ENCODE measurements at regions of chr20 and their contacts with region 1.

Region 1: GRCh38 chr20:46022411-46023147 is 6.4 kb upstream of the SLC12A5 start:
- DNase-seq: peak in 6 of 7 donors; percentile 53 to 71 (median 70)
- H3K4me3 ChIP-seq: peak overlapping the region in 1 of 4 donors; percentile 83
- H3K27ac ChIP-seq: no peak overlapping the region
- H3K4me1 ChIP-seq: peaks cover 0 to 12% of the 10 kb centered on the region in 2 donors
- H3K27me3 ChIP-seq: no peaks in the 10 kb centered on the region
- CTCF ChIP-seq: peak; percentile 42 to 87 (median 66)
- POLR2A ChIP-seq: no peak

Region 2: DNA sequence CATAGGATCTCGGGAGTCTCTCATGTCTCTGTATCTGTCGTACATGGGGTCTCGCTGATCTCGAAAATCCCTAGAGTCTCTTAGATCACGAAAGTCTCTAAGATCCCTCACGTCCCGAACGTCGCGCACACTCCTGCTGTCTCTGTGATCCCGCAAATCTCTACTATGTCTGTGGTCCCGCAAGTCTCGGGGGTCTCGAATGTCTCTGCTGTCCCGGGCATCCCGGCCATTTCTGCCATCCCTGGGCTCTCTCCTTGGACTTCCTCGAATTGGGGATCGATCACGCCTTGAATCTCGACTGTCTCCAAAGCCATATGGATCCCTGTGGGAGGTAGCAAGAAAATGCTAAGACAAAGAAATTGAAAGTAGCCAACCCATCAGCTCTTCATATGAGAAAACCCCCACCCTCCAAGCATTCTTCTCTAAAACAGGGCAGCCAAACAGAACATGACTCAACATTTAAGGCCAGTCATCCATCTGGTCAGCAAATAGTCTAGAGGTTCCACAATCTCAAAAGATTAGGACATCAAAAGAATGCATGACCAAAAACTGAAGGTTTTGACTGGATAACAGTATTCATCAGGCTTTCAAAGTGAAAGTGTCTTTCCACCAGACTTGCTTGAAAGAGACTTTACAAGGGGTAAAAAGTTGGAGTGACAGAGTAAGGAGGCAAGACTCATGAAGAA is 47.8 kb after region 1 on chr20:
- intact Hi-C with region 1: loop called in 1 of 2 experiments (anchors 10 kb)
- DNase-seq: peak in 1 of 7 donors; percentile 37
- H3K4me3 ChIP-seq: no peak overlapping the region
- H3K27ac ChIP-seq: no peak overlapping the region
- H3K4me1 ChIP-seq: peaks cover 0 to 10% of the 10 kb centered on the region in 2 donors
- H3K27me3 ChIP-seq: no peaks in the 10 kb centered on the region
- CTCF ChIP-seq: no peak
- POLR2A ChIP-seq: no peak

Region 3: DNA sequence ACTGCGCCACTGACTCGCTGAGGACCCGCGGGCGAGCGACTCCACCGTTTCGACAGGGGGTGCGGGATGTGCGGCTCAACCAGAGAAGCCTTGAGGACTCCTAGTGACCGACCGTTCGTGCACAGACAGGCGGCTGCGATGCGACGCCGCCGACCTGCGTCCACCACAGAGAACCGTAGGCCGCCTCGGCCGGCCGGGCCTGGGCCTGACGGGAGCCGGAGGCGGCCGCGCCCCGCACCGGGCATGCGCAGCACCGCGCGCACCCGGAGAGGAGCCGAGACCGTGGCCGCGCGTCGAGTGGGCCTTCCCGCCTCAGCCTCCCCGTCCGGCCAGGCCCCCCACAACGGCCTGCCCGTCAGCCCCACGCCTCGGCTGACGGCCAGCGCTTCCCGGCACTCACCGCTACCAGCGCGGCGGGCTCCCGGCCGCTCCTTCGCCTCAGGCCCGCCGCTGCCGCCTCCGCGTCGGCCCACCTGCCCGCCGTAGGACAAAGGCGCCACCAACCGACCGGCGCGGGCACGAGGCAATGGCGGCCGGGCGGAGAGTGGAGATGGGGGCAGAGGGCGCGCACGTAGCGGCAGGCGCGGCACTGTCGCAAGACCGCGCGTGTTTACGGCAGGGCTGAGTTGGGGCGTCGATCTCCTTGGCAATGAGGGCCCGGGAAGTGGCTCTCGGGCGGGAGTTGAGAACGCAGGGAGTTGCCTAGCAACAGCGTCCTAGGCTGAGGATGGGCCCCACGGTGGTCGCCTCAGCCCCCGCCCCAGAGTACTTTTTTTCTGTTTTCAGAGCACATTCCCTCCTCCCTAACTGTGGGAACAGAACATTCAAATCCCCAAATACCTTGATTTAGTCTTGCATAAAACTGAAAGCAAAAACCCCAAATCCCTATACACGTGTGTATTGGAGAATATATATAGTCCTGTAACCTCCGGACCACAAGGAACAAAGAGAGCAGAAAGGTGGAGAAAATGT is 67.1 kb after region 1 on chr20 and contains the start of gene NCOA5:
- intact Hi-C with region 1: loop called (anchors 5 to 10 kb)
- DNase-seq: peak; percentile 96 to 97 (median 96)
- H3K4me3 ChIP-seq: peak within 1 kb of the TSS; percentile 39 to 99 (median 68)
- H3K27ac ChIP-seq: peak within 1 kb of the TSS; percentile 93 to 100 (median 99)
- H3K4me1 ChIP-seq: peaks cover 29 to 49% of the 10 kb centered on the region in 2 donors
- H3K27me3 ChIP-seq: no peaks in the 10 kb centered on the region
- CTCF ChIP-seq: peak in 2 of 6 experiments; percentile 3 to 30
- POLR2A ChIP-seq: peak; percentile 83 to 91
- total RNA-seq, gene NCOA5: 17.8 to 44.8 (median 25.9) TPM

Region 4: GRCh38 chr20:46174469-46175128 is 152.0 kb after region 1 on chr20:
- intact Hi-C with region 1: loop called (anchors 10 kb)
- DNase-seq: peak; percentile 55 to 87 (median 79)
- H3K4me3 ChIP-seq: no peak overlapping the region
- H3K27ac ChIP-seq: no peak overlapping the region
- H3K4me1 ChIP-seq: no peaks in the 10 kb centered on the region
- H3K27me3 ChIP-seq: peaks cover 11% of the 10 kb centered on the region
- CTCF ChIP-seq: peak; percentile 22 to 76 (median 53)
- POLR2A ChIP-seq: no peak

Measured in adrenal gland (tissue), 19 donors.